MCF 10A (cell line): ENCODE measurements at regions of chr2 and their contacts with region 1.

Region 1: DNA sequence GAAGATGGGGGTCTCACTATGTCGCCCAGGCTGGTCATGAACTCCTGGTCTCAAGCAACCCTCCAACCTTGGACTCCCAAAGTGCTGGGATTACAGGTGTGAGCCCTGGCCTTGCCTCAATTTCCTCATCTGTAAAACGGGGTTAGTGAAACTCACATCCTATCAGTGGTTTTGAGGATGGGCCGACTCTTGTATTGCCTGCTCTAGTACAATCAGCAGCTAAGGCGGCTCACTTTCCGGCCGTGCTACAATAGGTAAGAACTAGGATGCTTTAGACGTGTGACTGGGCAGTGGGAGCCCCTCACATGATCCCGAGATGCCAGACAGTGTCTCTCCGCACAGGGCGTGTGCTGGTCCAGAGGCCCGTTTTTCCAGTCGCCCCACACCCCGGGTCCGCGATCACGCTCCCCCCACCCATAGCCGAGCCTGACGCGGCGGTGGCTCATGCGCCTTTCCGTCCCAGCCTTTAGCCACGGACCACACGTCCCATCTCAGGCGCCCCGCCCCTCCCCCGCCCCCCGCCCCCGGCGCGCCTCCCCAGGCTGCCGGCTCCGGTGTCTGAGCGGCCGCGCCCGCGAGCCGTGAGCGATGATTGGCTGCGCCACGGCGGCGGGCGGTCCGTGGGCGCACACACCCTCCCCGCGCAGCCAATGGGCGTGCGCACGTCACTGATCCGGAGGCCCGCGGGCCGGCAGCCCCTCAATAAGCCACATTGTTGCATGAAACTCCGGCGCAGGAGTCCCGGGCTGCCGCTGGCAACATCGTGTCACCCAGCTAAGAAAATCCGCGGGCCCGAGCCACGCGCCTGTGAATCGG is at the start of gene HK2:
- DNase-seq: peak; percentile 88
- H3K4me3 Mint-ChIP-seq: peak within 1 kb of the TSS; percentile 85
- H3K27ac Mint-ChIP-seq: peak within 1 kb of the TSS; percentile 86
- H3K4me1 Mint-ChIP-seq: peaks cover 34% of the 10 kb centered on the region
- H3K27me3 Mint-ChIP-seq: no peaks in the 10 kb centered on the region
- CTCF ChIP-seq: no peak
- total RNA-seq, gene HK2: 40.4 and 47.8 TPM in 2 replicates

Region 2: GRCh38 chr2:74696829-74697228 is 136.8 kb before region 1 on chr2:
- CTCF ChIA-PET with region 1: interaction called, 8 read pairs
- POLR2A ChIA-PET with region 1: interaction called, 10 read pairs
- intact Hi-C with region 1: no loop called
- DNase-seq: peak; percentile 30
- H3K4me3 Mint-ChIP-seq: no peak overlapping the region
- H3K27ac Mint-ChIP-seq: no peak overlapping the region
- H3K4me1 Mint-ChIP-seq: no peaks in the 10 kb centered on the region
- H3K27me3 Mint-ChIP-seq: peaks cover 24% of the 10 kb centered on the region
- CTCF ChIP-seq: no peak

Region 3: DNA sequence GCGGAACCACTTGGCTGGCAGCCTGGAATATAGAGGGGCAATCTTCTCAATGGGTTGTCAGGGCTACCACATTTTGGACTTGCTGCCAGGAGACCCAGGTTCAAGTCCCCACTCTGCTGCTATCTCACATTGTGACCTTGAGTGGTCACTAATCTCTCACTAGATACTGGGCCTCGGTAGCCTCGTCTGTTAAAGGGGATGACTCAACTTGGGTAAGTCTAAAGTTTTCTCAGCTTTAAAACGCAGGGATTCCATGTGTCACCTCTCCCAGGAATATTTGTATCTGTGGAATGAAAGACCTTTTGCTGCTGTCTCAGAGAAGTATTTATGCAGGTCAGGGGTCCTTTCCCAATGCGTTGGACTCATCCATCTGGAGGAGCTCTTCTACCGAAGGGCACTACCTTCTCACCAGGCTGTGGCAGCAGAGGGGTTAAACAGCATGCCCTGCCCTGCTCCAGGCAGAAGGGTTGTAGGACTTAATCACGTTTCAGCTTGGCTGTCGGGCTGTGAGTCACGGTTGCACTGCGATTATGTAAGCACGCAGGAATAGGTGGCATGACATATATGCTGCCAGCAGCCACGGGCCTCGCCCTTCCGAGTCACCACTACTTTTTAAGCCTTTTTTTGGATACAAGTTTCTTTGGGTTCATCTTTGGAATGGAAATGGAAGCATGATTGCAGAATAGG is 93.1 kb before region 1 on chr2:
- CTCF ChIA-PET with region 1: interaction called, 25 read pairs
- POLR2A ChIA-PET with region 1: interaction called, 123 read pairs
- intact Hi-C with region 1: loop called (anchors 2 kb)
- DNase-seq: peak; percentile 98
- H3K4me3 Mint-ChIP-seq: peak overlapping the region; percentile 28
- H3K27ac Mint-ChIP-seq: peak overlapping the region; percentile 95
- H3K4me1 Mint-ChIP-seq: peaks cover 26% of the 10 kb centered on the region
- H3K27me3 Mint-ChIP-seq: no peaks in the 10 kb centered on the region
- CTCF ChIP-seq: no peak

Region 4: DNA sequence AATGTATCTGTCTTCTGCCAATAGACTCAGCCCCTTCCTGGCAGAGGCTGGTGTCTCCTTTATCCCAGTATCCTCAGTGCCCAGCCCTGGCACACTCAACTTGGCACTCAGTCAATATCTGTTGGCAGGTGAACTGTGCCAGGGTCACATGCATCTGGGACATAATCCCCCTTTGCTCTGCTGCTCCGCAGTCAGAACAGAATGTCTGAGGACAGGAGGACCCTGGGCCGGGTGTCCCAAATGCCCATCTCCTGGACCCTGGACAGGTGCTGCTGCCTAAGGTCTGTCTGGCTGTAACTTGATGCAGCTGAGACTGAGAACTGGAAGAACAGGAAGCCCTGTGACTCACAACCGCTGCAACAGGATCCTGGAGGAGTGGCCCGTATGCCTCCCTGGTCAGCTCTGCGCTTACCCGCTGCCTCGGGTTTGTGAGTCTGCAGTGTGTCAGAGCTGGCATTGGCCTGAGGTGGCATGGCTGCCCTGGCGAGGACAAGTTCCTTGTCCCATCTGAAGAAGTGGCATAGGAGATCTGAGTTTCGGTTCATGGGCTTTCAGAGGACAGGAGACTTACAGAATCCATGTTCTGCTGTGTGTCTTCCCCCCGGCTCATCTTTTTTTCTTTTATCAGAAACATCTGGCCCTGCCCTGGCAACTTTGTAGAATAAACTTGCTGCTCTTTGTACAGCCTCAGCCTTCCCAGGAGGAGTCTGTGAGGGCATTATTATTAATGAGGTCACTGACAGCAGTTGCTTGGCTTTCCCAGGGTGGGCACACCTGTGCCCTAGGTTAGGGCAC is 11.8 kb after region 1 on chr2:
- CTCF ChIA-PET with region 1: interaction called, 23 read pairs
- POLR2A ChIA-PET with region 1: interaction called, 27 read pairs
- intact Hi-C with region 1: no loop called
- DNase-seq: peak; percentile 96
- H3K4me3 Mint-ChIP-seq: peak overlapping the region; percentile 50
- H3K27ac Mint-ChIP-seq: peak overlapping the region; percentile 96
- H3K4me1 Mint-ChIP-seq: peaks cover 57% of the 10 kb centered on the region
- H3K27me3 Mint-ChIP-seq: no peaks in the 10 kb centered on the region
- CTCF ChIP-seq: no peak

Region 5: DNA sequence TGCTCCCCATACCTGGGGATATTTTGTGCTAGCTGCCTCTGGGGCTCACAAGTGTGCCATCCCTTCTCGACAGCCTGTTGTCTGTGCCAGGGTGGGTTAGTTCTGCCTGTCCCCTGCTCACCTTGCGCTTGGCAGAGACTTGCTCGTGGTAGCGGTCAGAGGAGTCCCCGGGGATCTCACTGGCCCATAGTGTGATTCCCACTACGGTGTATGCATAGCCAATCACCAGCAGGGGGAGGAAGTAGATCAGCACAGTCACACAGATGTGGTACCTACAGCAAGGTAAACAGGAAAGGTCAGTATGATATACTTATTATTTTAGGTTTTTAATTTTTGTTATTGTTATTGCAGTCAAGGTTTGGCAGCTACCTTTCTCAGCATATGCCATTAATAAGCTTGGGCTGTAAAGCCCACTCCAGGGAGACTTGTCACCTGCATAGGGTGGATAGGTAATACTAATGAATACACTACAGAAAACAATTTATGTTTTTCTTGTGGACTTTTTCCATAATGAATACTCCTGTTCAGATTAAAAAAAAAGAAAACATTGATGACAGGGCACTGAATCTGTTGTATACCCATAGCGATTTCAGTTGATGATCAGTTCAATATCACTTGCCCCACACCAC is 220.0 kb after region 1 on chr2:
- CTCF ChIA-PET with region 1: no interaction called
- POLR2A ChIA-PET with region 1: no interaction called
- intact Hi-C with region 1: no loop called
- DNase-seq: peak; percentile 62
- H3K4me3 Mint-ChIP-seq: no peak overlapping the region
- H3K27ac Mint-ChIP-seq: no peak overlapping the region
- H3K4me1 Mint-ChIP-seq: no peaks in the 10 kb centered on the region
- H3K27me3 Mint-ChIP-seq: no peaks in the 10 kb centered on the region
- CTCF ChIP-seq: peak; percentile 78